Motor neuron (in vitro differentiated cells): ENCODE measurements at regions of chr3 and their contacts with region 1.

Region 1: DNA sequence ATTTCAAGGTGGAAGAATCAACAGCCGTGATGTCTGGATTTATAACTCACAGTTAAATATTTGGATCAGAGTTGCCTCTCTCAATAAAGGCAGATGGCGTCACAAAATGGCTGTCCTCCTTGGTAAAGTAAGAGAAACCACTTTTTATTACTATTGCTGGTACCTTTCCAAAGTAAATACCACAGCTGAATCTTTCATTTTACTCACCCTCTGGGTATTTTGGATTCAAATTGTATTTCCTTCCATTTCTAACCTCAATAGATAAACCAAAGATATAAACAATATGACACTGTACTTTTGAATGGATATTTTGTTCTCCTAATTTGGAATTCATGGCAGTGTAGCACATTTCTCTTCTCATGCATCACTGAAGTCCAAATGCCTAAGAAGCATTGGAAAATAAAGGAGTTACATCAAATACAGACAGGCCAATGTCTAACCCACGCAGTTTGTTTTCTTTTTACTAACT is 29.5 kb downstream of the KLHL24 start:
- ATAC-seq: peak in 1 of 8 experiments; percentile 54
- H3K4me3 ChIP-seq: no peak overlapping the region
- H3K27ac ChIP-seq: no peak overlapping the region
- H3K4me1 ChIP-seq: peaks cover 0 to 17% of the 10 kb centered on the region in 2 donors

Region 2: DNA sequence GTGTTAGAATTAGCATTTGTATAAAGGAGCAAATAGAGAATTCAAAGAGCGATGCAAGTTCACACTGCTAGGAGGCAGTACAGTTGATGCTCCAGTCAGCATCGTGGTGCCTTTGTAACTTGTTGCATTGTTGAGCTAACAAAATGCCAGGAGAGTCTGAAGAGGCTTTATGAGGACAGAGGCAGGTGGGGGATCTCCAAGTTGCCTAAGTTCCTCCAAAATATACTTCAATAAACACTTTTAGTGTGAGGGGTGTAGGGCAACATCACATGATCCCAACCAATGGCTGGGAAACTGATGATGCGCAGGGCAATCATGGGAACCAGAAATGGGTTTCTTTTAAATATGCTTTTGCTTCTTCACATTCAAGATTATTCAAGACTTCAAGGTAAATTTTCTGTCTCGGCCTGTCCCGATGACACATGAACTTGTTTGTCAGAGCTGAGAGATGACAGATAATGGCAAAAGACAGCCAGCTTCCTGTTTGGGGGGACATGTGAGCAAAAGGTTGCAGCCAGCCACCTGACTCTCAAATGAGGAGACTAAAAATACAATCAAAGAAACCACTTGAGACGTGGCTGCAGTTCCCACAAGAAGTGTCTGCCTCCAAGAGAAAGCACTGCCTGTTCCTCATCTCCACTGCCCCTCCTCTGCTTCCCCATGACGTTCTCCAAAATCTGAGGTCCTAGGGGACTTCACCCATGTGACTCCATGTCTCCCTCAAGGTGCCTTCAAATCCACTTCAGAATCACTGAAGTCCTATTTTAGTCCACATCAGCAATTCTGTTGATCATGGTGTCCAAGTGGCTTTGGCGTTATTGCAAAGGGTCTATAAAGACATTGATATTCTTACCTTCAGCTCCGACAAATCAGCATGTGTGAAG is 148.7 kb before region 1 on chr3:
- in situ Hi-C with region 1: loop called in 1 of 9 experiments (anchors 25 kb)
- ATAC-seq: no peak
- H3K4me3 ChIP-seq: no peak overlapping the region
- H3K27ac ChIP-seq: no peak overlapping the region
- H3K4me1 ChIP-seq: peaks cover 41% of the 10 kb centered on the region in 2 donors